HepG2 (cell line): ENCODE measurements at regions of chr5 and their contacts with region 1.

Region 1: DNA sequence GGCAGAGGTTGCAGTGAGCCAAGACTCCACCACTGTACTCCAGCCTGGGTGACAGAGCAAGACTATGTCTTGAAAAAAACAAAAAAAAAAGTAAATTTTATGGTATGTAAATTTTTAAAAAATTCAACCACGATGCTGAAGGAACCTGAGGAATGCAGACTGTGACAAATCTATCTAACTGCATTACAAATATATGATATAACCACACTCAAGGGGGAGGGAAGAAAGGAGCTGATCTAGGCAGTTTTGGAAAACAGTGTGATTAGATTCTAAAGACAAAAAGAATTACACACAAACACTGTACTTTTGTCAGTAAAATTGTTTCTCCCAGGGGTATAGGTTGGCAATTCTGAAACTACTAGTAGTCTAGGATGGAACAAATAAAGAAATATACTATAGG is 17.0 kb downstream of the LARS1 start:
- DNase-seq: no peak
- ATAC-seq: no peak
- H3K4me3 ChIP-seq: no peak overlapping the region
- H3K27ac ChIP-seq: no peak overlapping the region
- H3K4me1 ChIP-seq: peaks cover 18% of the 10 kb centered on the region
- H3K27me3 ChIP-seq: no peaks in the 10 kb centered on the region
- CTCF ChIP-seq: no peak
- EP300 ChIP-seq: no peak
- POLR2A ChIP-seq: no peak
- RAD21 ChIP-seq: no peak

Region 2: DNA sequence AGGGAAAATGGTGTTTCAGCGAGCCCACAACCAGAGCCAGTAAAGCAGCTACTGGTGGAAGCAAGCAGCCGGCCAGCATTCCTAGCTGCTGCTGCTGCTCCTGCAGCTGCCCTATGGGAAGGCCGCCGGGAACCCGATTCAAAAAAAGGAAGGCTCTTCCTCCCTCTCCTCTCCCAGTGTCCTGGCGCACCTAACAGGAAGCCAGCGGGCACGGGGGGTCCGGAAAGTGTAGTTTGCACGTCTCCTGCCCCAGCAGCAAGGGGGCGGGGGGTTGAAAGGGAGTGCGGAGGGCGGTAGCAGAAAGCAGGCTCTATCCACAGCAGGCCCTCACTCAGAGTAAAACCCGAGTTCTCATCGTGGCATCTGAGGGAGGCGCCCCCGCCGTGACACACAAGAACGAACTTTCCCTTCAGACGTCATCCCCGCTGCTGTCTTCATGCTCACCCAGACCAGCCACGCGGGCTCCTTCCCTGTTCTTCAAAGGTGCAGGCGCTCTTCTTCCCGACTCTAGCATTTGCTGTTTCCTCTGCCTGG is 309.1 kb before region 1 on chr5:
- CTCF ChIA-PET with region 1: no interaction called
- POLR2A ChIA-PET with region 1: no interaction called
- in situ Hi-C with region 1: no loop called
- intact Hi-C with region 1: no loop called
- DNase-seq: peak; percentile 30
- ATAC-seq: peak; percentile 88
- H3K4me3 ChIP-seq: peak overlapping the region; percentile 49 to 71 (median 57); a peak in 5 of 6 replicates
- H3K27ac ChIP-seq: peak overlapping the region; percentile 30
- H3K4me1 ChIP-seq: peaks cover 49% of the 10 kb centered on the region
- H3K27me3 ChIP-seq: no peaks in the 10 kb centered on the region
- CTCF ChIP-seq: no peak
- EP300 ChIP-seq: no peak
- POLR2A ChIP-seq: no peak
- RAD21 ChIP-seq: no peak

Region 3: DNA sequence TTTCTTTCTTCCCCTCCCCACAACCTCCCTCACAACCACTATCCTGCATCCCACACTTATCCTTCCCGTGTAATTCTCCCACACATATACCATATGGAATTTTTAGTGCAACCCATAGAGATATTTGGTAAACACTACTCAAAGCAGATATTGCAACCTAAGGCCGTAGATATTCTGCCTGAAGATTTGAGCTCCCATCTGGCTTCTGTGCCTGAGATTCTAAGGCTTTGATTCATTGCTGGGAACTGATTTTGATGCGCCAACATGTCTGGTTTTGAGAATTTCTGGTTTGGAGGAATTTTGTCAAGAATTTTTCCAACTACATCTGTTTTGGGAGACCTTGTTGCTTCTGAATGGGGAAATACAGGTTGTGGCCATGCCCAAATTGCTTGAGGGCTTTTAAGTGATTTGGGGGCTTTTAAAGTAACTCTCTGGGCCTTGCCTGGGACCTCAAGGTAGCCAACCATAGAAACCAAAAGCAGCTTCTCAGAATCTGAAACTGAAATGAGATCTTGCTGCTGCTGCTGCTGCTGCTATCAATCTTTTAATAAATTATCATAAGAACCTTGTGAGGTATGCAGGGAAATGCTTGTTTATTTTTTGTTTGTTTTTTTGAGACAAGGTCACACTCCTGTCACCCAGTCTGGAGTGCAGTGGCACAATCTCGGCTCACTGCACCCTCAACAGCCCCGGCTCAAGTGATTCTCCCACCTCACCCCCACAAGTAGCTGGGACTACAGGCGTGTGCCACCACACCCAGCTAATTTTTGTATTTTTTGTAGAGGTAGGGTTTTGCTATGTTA is 96.3 kb before region 1 on chr5:
- CTCF ChIA-PET with region 1: no interaction called
- POLR2A ChIA-PET with region 1: no interaction called
- in situ Hi-C with region 1: no loop called
- intact Hi-C with region 1: no loop called
- DNase-seq: no peak
- ATAC-seq: no peak
- H3K4me3 ChIP-seq: no peak overlapping the region
- H3K27ac ChIP-seq: no peak overlapping the region
- H3K4me1 ChIP-seq: peaks cover 8% of the 10 kb centered on the region; the same call in 1 of the 2 replicates
- H3K27me3 ChIP-seq: no peaks in the 10 kb centered on the region
- CTCF ChIP-seq: no peak
- EP300 ChIP-seq: no peak
- POLR2A ChIP-seq: no peak
- RAD21 ChIP-seq: no peak

Region 4: DNA sequence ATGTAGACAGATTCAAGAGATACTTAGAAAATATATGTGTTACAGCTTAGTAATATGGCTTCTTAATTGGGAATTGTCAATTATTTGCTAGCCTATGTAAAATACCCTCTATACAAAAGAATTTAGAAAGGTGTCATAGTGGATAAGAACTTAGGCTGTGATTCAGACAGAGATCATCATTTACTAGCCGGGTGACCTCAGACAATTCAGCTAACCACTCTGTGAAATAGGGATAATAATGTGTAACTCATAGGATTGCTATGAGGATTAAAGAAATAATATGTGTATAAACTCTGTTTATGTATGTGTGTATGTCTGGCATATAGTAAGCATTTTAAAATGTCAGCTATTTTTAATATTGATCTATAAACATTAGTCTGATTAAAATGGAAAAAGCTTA is 22.9 kb after region 1 on chr5:
- CTCF ChIA-PET with region 1: no interaction called
- POLR2A ChIA-PET with region 1: interaction called, 15 read pairs
- in situ Hi-C with region 1: no loop called
- intact Hi-C with region 1: no loop called
- DNase-seq: no peak
- ATAC-seq: no peak
- H3K4me3 ChIP-seq: no peak overlapping the region
- H3K27ac ChIP-seq: no peak overlapping the region
- H3K4me1 ChIP-seq: peaks cover 29% of the 10 kb centered on the region
- H3K27me3 ChIP-seq: no peaks in the 10 kb centered on the region
- CTCF ChIP-seq: no peak
- EP300 ChIP-seq: no peak
- POLR2A ChIP-seq: no peak
- RAD21 ChIP-seq: no peak